Caco-2 (cell line): ENCODE measurements at regions of chr3 and their contacts with region 1.

Region 1: GRCh38 chr3:179811321-179812095 is 158.7 kb downstream of the USP13 start:
- DNase-seq: peak; percentile 46 to 63
- H3K4me3 ChIP-seq: no peak overlapping the region
- H3K4me3 Mint-ChIP-seq: no peak overlapping the region
- H3K27ac Mint-ChIP-seq: peak overlapping the region; percentile 42
- H3K4me1 ChIP-seq: no peaks in the 10 kb centered on the region
- H3K4me1 Mint-ChIP-seq: no peaks in the 10 kb centered on the region
- H3K27me3 ChIP-seq: no peaks in the 10 kb centered on the region
- H3K27me3 Mint-ChIP-seq: no peaks in the 10 kb centered on the region
- CTCF ChIP-seq: peak; percentile 63 to 71

Region 2: DNA sequence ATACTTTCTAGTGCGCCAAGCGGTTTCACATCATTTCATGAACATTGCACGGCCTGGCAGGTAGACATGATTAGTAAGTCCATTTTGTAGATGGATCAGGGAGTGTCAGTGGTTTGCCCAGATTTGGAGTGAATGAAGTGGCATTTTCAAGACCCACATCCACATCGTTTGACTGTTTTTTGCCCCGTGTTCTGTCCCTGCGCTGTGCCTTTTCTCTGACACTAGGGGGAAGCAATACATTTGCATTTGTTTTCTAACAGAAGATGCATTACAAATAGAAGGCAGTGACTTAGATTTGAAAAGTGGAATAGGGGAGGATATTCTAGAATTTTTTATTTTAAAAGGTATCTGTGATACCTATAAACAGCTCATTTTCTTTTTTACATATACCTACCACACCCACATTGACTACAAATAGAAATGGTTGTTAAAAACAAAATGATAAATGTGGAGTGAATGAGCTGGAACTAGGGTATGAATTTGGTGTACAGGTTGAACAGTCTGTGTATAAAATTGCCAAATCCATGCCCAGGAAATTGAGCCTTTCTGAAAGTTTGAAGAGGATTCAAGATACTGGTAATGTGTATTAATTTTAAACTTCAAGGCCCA is 60.7 kb before region 1 on chr3:
- CTCF ChIA-PET with region 1: no interaction called
- POLR2A ChIA-PET with region 1: no interaction called
- intact Hi-C with region 1: loop called (anchors 1 kb)
- DNase-seq: peak in 1 of 2 experiments; percentile 30
- H3K4me3 ChIP-seq: no peak overlapping the region
- H3K4me3 Mint-ChIP-seq: no peak overlapping the region
- H3K27ac Mint-ChIP-seq: no peak overlapping the region
- H3K4me1 ChIP-seq: no peaks in the 10 kb centered on the region
- H3K4me1 Mint-ChIP-seq: no peaks in the 10 kb centered on the region
- H3K27me3 ChIP-seq: no peaks in the 10 kb centered on the region
- H3K27me3 Mint-ChIP-seq: no peaks in the 10 kb centered on the region
- CTCF ChIP-seq: peak; percentile 50 to 66

Region 3: DNA sequence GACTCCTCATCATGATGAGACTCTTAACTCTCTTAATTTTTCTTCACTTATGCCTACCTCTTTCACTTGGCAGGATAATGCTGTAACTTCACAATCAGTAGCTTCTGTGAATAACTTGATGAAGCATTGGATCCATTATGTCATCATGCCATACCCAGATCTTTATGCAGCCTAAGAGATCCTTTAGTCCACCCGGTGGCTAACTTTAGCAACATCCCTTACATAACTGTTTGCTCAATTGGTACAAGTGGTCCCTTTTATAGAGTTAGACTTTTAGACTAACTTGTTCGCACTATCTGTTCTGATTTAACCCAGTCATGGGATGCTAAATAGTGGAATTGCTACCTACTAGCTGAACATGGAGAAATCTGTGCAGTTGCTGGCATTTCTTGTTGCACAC is 25.9 kb after region 1 on chr3:
- CTCF ChIA-PET with region 1: no interaction called
- POLR2A ChIA-PET with region 1: no interaction called
- intact Hi-C with region 1: loop called (anchors 1 kb)
- DNase-seq: peak in 1 of 2 experiments; percentile 7
- H3K4me3 ChIP-seq: no peak overlapping the region
- H3K4me3 Mint-ChIP-seq: no peak overlapping the region
- H3K27ac Mint-ChIP-seq: no peak overlapping the region
- H3K4me1 ChIP-seq: no peaks in the 10 kb centered on the region
- H3K4me1 Mint-ChIP-seq: no peaks in the 10 kb centered on the region
- H3K27me3 ChIP-seq: no peaks in the 10 kb centered on the region; the same call in 1 of the 2 replicates
- H3K27me3 Mint-ChIP-seq: peaks cover 3% of the 10 kb centered on the region
- CTCF ChIP-seq: peak in 1 of 2 experiments; percentile 11

Region 4: DNA sequence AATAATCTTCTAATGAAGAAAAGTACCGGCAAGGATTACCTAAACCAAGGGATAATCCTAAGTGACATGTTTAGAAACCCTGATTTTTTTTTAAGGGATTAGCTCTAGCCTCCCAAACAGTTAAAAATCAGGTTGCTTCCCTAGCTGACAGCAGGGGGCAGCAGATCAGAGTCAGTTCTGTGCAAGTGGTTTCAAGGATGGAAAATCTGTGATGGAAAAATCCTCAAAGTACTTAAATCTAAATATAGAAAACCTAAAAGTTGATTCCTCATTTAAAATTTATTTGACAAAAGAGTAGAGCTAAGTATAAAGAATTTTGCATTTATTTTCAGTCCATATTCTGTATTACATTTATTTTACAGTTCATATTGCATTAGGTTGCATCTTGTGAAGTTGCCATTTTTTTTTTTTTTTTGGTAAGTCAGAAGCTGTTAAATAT is 117.6 kb after region 1 on chr3:
- CTCF ChIA-PET with region 1: interaction called, 7 read pairs
- POLR2A ChIA-PET with region 1: no interaction called
- intact Hi-C with region 1: loop called (anchors 5 kb)
- DNase-seq: peak; percentile 38 to 57
- H3K4me3 ChIP-seq: no peak overlapping the region
- H3K4me3 Mint-ChIP-seq: no peak overlapping the region
- H3K27ac Mint-ChIP-seq: no peak overlapping the region
- H3K4me1 ChIP-seq: no peaks in the 10 kb centered on the region
- H3K4me1 Mint-ChIP-seq: no peaks in the 10 kb centered on the region
- H3K27me3 ChIP-seq: no peaks in the 10 kb centered on the region; the same call in 1 of the 2 replicates
- H3K27me3 Mint-ChIP-seq: peaks cover 19% of the 10 kb centered on the region
- CTCF ChIP-seq: peak; percentile 76 to 85

Region 5: DNA sequence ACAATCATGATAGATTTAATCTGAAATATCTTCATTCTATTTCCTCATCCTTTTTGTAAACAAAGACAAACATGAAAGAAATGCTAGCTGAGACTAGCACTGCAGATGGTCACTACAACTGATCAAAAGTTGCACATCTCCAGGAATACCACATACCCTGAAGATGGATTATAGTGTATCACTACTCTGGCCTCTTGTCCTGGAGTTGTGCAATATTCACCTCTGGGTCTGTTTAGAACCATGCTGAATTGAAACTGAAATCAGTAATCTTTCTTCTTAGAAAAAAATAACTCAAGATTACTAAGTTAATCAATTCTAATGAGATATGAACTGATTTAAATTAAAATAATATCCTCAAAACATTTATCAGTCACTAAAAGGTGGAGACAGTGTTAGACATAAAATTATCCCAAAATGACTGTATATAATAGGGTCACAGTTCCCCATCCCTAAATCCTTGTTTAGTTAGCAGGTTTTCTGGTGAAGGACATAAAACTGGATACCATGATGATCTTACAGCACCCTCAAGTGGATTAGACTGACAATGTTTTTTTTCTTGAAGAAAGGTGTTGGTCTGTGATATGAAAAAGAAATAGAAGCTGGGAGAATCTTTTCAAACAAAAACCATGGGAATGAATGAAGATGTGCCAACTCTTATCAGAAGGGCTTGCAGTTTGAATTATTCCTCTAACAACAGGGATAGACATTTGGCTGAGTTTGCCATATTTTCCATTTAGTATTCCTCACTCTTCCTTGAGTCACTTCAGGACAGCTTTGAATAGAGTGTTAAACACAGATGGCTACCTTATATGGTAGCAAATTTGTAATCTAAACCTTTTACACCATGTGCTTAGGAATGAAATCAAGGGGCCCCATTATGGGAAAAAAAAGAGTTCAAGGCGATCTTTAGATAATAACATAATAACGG is 783.4 kb after region 1 on chr3:
- CTCF ChIA-PET with region 1: no interaction called
- POLR2A ChIA-PET with region 1: no interaction called
- intact Hi-C with region 1: loop called (anchors 1 kb)
- DNase-seq: peak in 1 of 2 experiments; percentile 14
- H3K4me3 ChIP-seq: no peak overlapping the region
- H3K4me3 Mint-ChIP-seq: no peak overlapping the region
- H3K27ac Mint-ChIP-seq: no peak overlapping the region
- H3K4me1 ChIP-seq: no peaks in the 10 kb centered on the region
- H3K4me1 Mint-ChIP-seq: no peaks in the 10 kb centered on the region
- H3K27me3 ChIP-seq: no peaks in the 10 kb centered on the region
- H3K27me3 Mint-ChIP-seq: peaks cover 3% of the 10 kb centered on the region
- CTCF ChIP-seq: peak in 1 of 2 experiments; percentile 13